ENCODE measurements at regions of chr3 and their contacts with region 1.

Region 1: GRCh38 chr3:182713743-182714517 is 79.4 kb upstream of the ATP11B start:
- DNase-seq: peak; percentile 36
- H3K4me3 ChIP-seq: no peak overlapping the region
- H3K27ac ChIP-seq: no peak overlapping the region
- H3K27me3 ChIP-seq: no peaks in the 10 kb centered on the region
- CTCF ChIP-seq: peak; percentile 62

Region 2: GRCh38 chr3:182671942-182672341 is 42.0 kb before region 1 on chr3:
- CTCF ChIA-PET with region 1: no interaction called
- POLR2A ChIA-PET with region 1: no interaction called
- DNase-seq: no peak
- H3K4me3 ChIP-seq: no peak overlapping the region
- H3K27ac ChIP-seq: no peak overlapping the region
- H3K27me3 ChIP-seq: no peaks in the 10 kb centered on the region
- CTCF ChIP-seq: no peak

Region 3: DNA sequence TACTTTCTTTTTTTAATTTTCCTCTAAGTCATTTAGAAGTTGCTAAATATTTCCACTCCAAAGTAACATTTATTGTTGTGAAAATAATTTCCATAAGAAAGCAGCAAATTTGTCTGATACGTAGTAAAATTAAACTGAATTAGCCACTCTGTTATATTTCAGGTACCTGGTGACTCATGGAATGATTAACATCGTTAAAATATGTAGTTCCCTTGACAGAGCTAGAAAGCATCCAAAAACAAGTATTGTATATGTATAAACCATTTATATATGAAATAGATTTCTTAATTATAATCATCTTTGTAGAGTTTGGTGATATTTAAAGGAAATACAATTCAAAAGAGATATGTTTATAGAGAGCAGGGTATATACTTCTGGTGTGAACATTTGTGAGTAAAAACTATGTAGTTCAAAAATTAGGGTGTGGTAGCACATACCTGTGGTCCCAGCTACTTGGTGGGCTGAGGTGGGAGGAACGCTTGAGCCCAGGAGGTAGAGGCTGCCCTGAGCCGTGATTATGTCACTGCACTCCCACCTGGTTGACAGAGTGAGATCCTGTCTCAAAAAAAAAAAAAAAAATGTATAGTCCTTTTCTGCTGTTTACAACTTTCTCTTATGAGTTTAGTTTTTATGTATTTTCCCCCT is 116.0 kb after region 1 on chr3:
- CTCF ChIA-PET with region 1: interaction called, 12 read pairs
- POLR2A ChIA-PET with region 1: no interaction called
- DNase-seq: no peak
- H3K4me3 ChIP-seq: no peak overlapping the region
- H3K27ac ChIP-seq: no peak overlapping the region
- H3K27me3 ChIP-seq: no peaks in the 10 kb centered on the region
- CTCF ChIP-seq: no peak

Region 4: GRCh38 chr3:182837855-182838454 is 124.0 kb after region 1 on chr3:
- CTCF ChIA-PET with region 1: interaction called, 72 read pairs
- POLR2A ChIA-PET with region 1: no interaction called
- DNase-seq: no peak
- H3K4me3 ChIP-seq: no peak overlapping the region
- H3K27ac ChIP-seq: no peak overlapping the region
- H3K27me3 ChIP-seq: no peaks in the 10 kb centered on the region
- CTCF ChIP-seq: peak; percentile 50; the same call in 1 of the 2 replicates